K562 (cell line): ENCODE measurements at regions of chr17 and their contacts with region 1.

Region 1: DNA sequence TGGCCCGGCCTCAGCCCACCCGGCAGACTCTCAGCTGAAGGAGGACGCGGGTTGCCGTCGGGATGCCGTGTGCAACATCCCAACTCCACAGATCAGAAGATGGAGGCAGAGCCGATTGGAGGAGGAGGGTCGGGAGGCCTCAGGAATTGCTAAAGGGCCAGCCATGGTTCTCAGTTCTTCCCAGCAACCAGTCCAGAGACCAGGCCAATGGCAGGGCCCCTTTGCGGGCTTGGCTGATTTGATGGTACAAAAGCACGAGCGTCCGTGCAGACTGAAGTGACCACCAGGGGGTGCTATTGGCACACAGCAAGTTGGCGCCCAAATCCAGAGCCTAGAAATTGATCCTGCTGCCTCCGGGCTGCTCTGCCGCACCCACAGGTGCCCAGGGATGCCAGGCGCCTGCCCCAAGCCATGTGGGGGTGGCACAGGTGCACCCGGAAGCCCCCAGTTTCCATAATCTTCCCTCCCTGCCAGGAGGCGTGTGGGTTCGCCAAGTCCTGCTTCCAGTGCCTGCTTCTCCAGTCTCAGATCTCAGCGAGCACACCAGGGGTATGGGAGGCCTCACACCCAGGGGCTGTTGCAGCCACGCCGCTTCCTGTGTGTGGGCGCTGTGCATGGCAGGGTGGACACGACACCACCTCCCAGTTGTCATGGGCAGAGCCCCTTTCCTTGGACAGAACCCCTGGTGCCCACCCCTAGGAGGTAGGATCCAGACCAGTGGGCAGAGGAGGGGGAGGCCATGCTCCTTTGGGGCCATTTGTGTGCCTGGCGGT is 7.1 kb upstream of the TEX19 start:
- DNase-seq: peak; percentile 68 to 92 (median 74)
- ATAC-seq: peak; percentile 94
- H3K4me3 ChIP-seq: no peak overlapping the region
- H3K27ac ChIP-seq: no peak overlapping the region
- H3K4me1 ChIP-seq: peaks cover 11 to 59% of the 10 kb centered on the region in 2 experiments; a peak in 4 of 5 replicates
- H3K27me3 ChIP-seq: no peaks in the 10 kb centered on the region
- CTCF ChIP-seq: peak; percentile 90 to 95 (median 93)
- EP300 ChIP-seq: no peak
- POLR2A ChIP-seq: no peak
- RAD21 ChIP-seq: peak; percentile 87 to 94

Region 2: DNA sequence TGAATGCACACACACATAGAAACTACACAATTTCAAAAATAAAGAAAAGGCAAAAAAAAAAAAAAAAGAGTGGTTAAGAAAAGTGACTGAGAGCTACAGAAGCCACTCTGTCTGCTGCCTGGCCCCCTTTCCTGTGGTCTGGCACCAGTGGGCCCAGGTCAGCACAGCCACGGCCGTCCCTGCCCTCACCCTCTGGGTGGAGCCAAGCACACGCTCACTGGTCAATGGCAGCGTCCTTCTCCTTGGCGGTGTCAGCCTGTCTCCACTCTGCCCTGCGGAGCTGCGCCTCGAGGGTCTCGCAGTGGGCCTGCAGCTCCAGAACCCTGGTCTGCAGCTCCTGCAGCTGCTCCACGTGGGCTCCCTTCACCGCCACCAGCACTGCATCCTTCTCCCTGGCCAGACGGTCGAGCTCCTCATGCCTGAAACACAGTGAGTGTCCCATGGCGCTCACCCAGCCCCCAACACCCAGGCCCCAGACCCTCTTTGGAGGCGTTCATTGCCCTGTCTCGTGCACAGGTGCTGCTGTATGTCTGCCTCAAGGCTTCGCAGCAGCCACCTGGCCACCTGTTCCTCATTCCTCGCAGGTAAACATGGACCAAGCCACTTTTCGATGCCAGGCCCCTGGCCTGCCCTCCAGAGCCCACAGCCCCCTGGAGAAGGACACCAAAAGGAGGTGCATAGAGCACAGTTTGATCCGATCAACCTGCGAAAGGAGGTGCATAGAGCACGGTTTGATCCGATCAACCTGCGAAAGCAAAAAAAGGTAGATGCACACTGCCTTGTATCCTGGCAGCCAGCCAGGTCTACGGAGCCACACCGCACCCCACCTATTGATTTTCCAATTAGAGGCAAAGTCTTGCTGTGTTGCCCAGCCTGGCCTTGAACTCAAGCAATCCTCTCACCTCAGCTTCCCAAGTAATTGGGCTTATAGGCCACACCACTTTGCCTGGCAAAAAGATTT is 163.6 kb before region 1 on chr17:
- CTCF ChIA-PET with region 1: no interaction called
- POLR2A ChIA-PET with region 1: no interaction called
- in situ Hi-C with region 1: no loop called
- intact Hi-C with region 1: no loop called
- DNase-seq: no peak
- ATAC-seq: no peak
- H3K4me3 ChIP-seq: no peak overlapping the region
- H3K27ac ChIP-seq: no peak overlapping the region
- H3K4me1 ChIP-seq: peaks cover 0 to 6% of the 10 kb centered on the region in 2 experiments; a peak in 2 of 5 replicates
- H3K27me3 ChIP-seq: no peaks in the 10 kb centered on the region
- CTCF ChIP-seq: no peak
- EP300 ChIP-seq: no peak
- POLR2A ChIP-seq: 0 out of 2 replicates have a peak, but pooled peaks have one; percentile 22
- RAD21 ChIP-seq: no peak

Region 3: DNA sequence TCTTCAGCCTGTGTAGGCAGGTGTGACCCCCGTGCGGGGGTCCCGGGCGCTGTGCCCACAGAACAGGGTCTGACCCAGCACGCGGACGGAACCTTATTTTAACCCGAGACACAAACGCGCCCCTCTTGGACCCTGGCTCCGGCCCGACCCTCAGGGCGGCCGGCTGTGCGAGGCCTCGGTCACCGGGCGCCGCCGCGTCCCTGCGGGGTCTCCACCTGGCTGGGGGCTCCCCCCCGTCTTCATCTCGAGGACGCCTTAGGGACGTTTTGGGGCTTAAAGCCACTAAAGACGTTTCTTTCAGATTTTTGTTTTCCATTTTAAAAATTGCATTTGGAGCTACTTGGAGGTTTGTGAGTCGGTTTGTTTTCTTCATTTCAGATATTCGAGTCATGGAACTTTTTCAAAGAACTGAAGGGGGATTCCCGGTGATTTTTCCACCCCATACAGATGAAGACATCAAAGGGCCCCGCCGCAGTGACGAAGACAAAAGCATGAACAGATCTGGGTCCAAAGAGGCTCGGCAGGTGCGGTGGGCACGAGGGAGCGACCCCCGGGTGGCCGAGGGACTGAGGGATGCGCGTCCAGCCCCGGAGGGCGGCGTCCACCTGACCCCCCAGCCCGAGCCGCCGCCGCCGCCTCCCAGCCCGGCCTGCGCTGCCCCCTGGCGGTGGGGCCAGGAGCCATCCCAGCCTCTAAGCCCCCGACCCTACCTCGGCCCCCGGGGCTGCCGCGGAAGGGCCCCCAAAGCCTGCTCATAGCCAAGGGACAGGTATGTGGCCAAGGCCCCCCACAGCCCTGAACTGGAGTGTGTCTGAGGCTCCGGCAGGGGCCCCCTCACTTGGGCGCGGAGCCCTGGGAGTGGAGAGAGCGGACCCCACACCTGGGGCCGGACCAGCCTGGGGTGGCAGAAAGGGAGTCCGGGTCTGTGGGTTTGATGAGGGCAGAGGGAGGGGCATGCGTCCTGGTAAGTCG is 30.7 kb before region 1 on chr17:
- CTCF ChIA-PET with region 1: no interaction called
- POLR2A ChIA-PET with region 1: no interaction called
- in situ Hi-C with region 1: no loop called
- intact Hi-C with region 1: no loop called
- DNase-seq: peak; percentile 66 to 87 (median 83)
- ATAC-seq: peak; percentile 87
- H3K4me3 ChIP-seq: no peak overlapping the region
- H3K27ac ChIP-seq: no peak overlapping the region
- H3K4me1 ChIP-seq: peaks cover 43 to 99% of the 10 kb centered on the region in 2 experiments
- H3K27me3 ChIP-seq: no peaks in the 10 kb centered on the region
- CTCF ChIP-seq: peak; percentile 65 to 87 (median 77)
- EP300 ChIP-seq: no peak
- POLR2A ChIP-seq: no peak
- RAD21 ChIP-seq: peak; percentile 88 to 92

Region 4: DNA sequence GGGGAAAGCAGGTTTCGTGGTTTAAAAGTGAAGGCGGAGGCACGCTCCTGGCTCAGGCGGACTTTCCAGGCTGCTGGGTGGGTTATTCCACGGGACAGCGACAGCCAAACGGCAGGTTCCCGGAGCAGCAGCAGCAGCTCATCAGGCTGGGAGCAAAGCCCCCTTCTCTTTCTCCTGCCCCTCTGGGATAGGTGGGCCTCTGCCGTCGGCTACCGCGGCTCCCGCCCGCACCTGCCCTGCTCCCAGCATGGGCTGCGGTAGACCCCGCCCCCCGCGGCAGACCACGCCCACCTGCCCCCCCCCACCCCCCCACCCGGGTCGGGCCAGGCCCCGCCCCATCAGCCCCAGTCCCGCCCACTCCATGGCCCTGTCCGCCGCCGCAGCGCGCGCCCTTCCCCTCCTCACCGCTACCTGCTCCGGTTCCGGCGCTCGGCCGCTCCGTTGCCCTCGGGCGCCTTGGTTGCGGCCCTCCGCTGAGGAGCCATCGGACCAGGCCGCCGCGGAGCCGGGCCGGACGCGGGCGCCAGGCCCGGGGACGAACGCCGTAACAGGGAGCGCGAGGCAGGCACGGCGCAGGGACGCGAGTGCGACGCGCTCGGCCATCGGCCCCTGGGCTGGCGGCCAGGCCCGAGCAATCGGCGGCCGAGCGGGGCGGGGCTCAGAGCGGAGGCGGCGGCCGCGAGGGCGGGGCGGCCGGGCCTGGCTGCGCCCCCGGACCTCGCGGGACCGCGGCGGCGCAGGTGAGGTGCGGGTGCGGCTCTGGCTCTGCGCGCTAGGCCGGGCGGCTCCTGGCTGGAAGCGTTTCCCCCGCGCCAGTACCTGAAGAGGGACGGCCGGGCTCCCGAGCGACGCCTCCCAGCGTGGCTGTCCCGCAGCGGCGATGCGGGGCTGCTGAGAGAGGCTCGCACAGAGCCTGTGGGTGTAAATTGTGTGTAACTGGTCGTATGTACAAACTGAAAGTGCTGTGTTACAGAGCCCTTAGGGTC is 66.4 kb after region 1 on chr17 and contains the starts of genes HEXD and OGFOD3:
- CTCF ChIA-PET with region 1: interaction called, 7 read pairs
- POLR2A ChIA-PET with region 1: interaction called, 4 read pairs
- in situ Hi-C with region 1: no loop called
- intact Hi-C with region 1: loop called (anchors 1 kb)
- DNase-seq: peak; percentile 91 to 100 (median 100)
- ATAC-seq: peak; percentile 85
- H3K4me3 ChIP-seq: peak within 1 kb of the TSS; percentile 90
- H3K27ac ChIP-seq: peak within 1 kb of the TSS; percentile 92
- H3K4me1 ChIP-seq: peaks cover 8 to 19% of the 10 kb centered on the region in 2 experiments
- H3K27me3 ChIP-seq: no peaks in the 10 kb centered on the region
- CTCF ChIP-seq: no peak
- EP300 ChIP-seq: no peak
- POLR2A ChIP-seq: peak; percentile 87
- RAD21 ChIP-seq: 0 out of 4 replicates have a peak, but pooled peaks of 1 of the 2 experiments have one; percentile 2
- polyA plus RNA-seq, gene HEXD: 1.0 TPM
- polyA plus RNA-seq, gene OGFOD3: 0.69 to 1.8 TPM

Region 5: GRCh38 chr17:82551779-82552457 is 200.0 kb after region 1 on chr17:
- CTCF ChIA-PET with region 1: interaction called, 12 read pairs
- POLR2A ChIA-PET with region 1: interaction called, 3 read pairs
- in situ Hi-C with region 1: loop called (anchors 5 kb)
- intact Hi-C with region 1: loop called (anchors 5 kb)
- DNase-seq: peak; percentile 75 to 84 (median 78)
- ATAC-seq: peak; percentile 95
- H3K4me3 ChIP-seq: no peak overlapping the region
- H3K27ac ChIP-seq: no peak overlapping the region
- H3K4me1 ChIP-seq: peaks cover 13 to 25% of the 10 kb centered on the region in 2 experiments; a peak in 4 of 5 replicates
- H3K27me3 ChIP-seq: no peaks in the 10 kb centered on the region
- CTCF ChIP-seq: peak; percentile 82 to 85 (median 83)
- EP300 ChIP-seq: 0 out of 2 replicates have a peak, but pooled peaks have one; percentile 26
- POLR2A ChIP-seq: no peak
- RAD21 ChIP-seq: peak; percentile 68 to 81

Region 6: DNA sequence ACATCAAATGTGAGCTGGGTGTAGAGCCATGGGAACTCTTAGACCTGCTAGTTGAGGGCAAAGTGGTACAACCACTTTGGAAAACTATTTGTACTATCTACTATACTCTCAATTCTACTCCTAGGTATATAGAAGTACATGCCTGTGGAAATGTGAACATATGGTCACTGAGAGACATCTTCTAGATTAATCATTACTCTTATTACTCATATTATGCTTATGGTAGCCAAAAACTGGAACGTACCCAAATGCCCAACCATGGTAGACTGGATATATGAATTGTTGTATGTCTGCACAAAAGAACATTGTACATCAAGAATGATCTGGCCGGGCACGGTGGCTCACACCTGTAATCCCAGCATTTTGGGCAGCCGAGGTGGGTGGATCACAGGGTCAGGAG is 293.6 kb after region 1 on chr17:
- CTCF ChIA-PET with region 1: no interaction called
- POLR2A ChIA-PET with region 1: no interaction called
- in situ Hi-C with region 1: no loop called
- intact Hi-C with region 1: no loop called
- DNase-seq: no peak
- ATAC-seq: no peak
- H3K4me3 ChIP-seq: no peak overlapping the region
- H3K27ac ChIP-seq: no peak overlapping the region
- H3K4me1 ChIP-seq: peaks cover 11 to 40% of the 10 kb centered on the region in 2 experiments; a peak in 4 of 5 replicates
- H3K27me3 ChIP-seq: no peaks in the 10 kb centered on the region
- CTCF ChIP-seq: no peak
- EP300 ChIP-seq: no peak
- POLR2A ChIP-seq: no peak
- RAD21 ChIP-seq: no peak

Region 7: GRCh38 chr17:82767041-82767754 is 415.3 kb after region 1 on chr17:
- CTCF ChIA-PET with region 1: interaction called, 3 read pairs
- POLR2A ChIA-PET with region 1: no interaction called
- in situ Hi-C with region 1: no loop called
- intact Hi-C with region 1: loop called (anchors 5 kb)
- DNase-seq: peak; percentile 42 to 59 (median 51)
- ATAC-seq: peak; percentile 79
- H3K4me3 ChIP-seq: no peak overlapping the region
- H3K27ac ChIP-seq: no peak overlapping the region
- H3K4me1 ChIP-seq: 0 out of 5 replicates have a peak, but pooled peaks cover 0 to 3% of the 10 kb centered on the region in 2 experiments
- H3K27me3 ChIP-seq: no peaks in the 10 kb centered on the region
- CTCF ChIP-seq: peak; percentile 64 to 78 (median 74)
- EP300 ChIP-seq: no peak
- POLR2A ChIP-seq: no peak
- RAD21 ChIP-seq: peak; percentile 30 to 66; a peak in 3 of 4 replicates